IMR-90 (cell line): ENCODE measurements at regions of chr16 and their contacts with region 1.

Region 1: GRCh38 chr16:49921791-49922456 is 66.0 kb upstream of the ZNF423 start:
- DNase-seq: peak; percentile 17
- ATAC-seq: peak; percentile 42; the same call in 1 of the 2 replicates
- H3K4me3 ChIP-seq: no peak overlapping the region
- H3K27ac ChIP-seq: no peak overlapping the region
- H3K4me1 ChIP-seq: no peaks in the 10 kb centered on the region
- H3K27me3 ChIP-seq: no peaks in the 10 kb centered on the region
- CTCF ChIP-seq: peak; percentile 47
- POLR2A ChIP-seq: no peak
- RAD21 ChIP-seq: peak; percentile 58

Region 2: DNA sequence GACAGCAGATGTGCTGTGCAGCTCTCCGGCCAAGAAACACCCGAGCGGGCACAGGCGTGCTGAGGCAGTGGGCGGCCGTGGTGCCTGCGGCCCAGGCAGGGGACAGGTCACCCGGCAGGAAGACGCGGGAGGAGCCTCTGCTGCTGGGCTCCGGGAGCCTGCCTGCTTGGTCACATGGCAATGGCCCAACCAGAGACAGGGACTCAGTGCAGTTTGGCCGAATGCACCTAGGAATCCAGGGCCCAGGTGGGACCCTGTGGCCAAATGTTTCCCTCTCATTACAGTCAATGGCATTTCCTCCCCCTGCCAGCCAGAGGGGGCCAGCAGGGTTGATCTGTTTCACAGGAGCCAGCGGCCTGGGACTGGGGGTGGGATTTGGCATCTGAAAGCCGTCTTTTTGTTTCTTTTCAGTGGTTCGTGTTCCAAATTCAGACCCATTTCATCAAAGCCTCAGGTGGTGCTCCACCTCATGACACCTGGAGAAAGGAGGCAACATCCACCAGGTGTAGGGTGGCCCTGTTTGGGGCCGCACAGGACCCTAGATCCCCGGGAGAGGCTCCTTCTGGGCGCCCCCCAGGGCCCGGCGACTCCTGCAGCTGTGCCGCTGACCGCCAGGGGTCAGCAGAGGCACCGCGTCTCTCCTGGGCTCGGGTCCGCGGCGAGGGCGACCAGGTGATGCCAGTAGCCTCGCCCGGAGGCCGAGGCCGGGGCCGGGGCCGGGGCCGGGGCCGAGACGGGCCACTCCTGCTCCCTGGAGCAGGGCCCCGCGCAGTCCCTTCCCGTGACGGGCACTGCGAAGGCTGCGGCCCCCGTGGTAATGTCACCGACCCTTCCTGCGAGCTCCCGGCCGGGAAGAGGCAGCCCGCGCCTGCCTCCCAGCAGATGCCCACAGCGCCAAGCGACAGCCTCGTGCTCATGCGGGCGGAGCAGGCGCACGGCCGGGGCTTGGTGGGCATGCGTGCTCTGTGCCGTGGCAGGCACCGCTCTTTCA is 429.9 kb before region 1 on chr16:
- CTCF ChIA-PET with region 1: interaction called, 3 read pairs
- POLR2A ChIA-PET with region 1: no interaction called
- dilution Hi-C with region 1: no loop called
- in situ Hi-C with region 1: no loop called
- intact Hi-C with region 1: loop called (anchors 5 kb)
- DNase-seq: no peak
- ATAC-seq: peak; percentile 93
- H3K4me3 ChIP-seq: no peak overlapping the region
- H3K27ac ChIP-seq: no peak overlapping the region
- H3K4me1 ChIP-seq: no peaks in the 10 kb centered on the region
- H3K27me3 ChIP-seq: no peaks in the 10 kb centered on the region
- CTCF ChIP-seq: peak; percentile 59
- POLR2A ChIP-seq: no peak
- RAD21 ChIP-seq: peak; percentile 37

Region 3: GRCh38 chr16:49716339-49716934 is 205.5 kb before region 1 on chr16:
- CTCF ChIA-PET with region 1: no interaction called
- POLR2A ChIA-PET with region 1: no interaction called
- dilution Hi-C with region 1: no loop called
- in situ Hi-C with region 1: no loop called
- intact Hi-C with region 1: no loop called
- DNase-seq: no peak
- ATAC-seq: no peak
- H3K4me3 ChIP-seq: no peak overlapping the region
- H3K27ac ChIP-seq: no peak overlapping the region
- H3K4me1 ChIP-seq: no peaks in the 10 kb centered on the region
- H3K27me3 ChIP-seq: no peaks in the 10 kb centered on the region; the same call in 1 of the 2 replicates
- CTCF ChIP-seq: no peak
- POLR2A ChIP-seq: no peak
- RAD21 ChIP-seq: no peak

Region 4: DNA sequence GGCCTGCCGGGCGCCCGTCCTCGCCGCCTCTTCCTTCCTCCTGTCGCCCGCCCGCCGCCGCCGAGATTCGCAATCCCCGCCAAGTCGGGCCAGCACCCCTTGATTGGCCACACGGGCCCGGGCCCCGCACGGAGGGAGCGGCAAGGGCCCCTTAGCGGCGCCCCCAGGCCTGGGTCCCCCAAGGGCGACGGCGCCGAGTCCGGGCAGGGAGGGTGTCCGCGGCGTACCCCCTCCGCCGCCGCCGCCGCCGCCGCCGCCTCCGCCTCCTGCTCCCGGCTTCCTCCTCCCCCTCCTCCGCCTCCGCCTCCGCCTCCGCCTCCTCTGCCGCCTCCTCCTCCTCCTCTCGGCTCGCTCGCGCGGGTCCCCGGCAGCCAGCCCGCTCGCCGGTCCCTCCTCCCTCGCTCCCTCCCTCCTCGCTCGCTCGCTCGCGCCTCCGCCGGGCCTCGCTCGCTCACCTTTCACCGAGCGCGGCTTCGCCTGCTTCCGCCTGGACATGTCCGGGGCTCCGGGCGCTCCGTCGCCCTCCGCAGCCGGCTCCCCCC is 66.6 kb before region 1 on chr16:
- CTCF ChIA-PET with region 1: no interaction called
- POLR2A ChIA-PET with region 1: no interaction called
- dilution Hi-C with region 1: no loop called
- in situ Hi-C with region 1: no loop called
- intact Hi-C with region 1: no loop called
- DNase-seq: peak; percentile 31
- ATAC-seq: peak; percentile 77
- H3K4me3 ChIP-seq: peak overlapping the region; percentile 71
- H3K27ac ChIP-seq: no peak overlapping the region
- H3K4me1 ChIP-seq: peaks cover 2% of the 10 kb centered on the region; the same call in 1 of the 2 replicates
- H3K27me3 ChIP-seq: peaks cover 66% of the 10 kb centered on the region
- CTCF ChIP-seq: no peak
- POLR2A ChIP-seq: no peak
- RAD21 ChIP-seq: no peak